ENCODE measurements at regions of chr4 and their contacts with region 1.

Region 1: GRCh38 chr4:6783053-6783981 is 790 bp downstream of the KIAA0232 start:
- DNase-seq: peak; percentile 91
- H3K4me3 Mint-ChIP-seq: peak overlapping the region; percentile 81
- H3K27ac Mint-ChIP-seq: peak overlapping the region; percentile 78
- H3K4me1 Mint-ChIP-seq: peaks cover 51% of the 10 kb centered on the region
- H3K27me3 Mint-ChIP-seq: no peaks in the 10 kb centered on the region

Region 2: DNA sequence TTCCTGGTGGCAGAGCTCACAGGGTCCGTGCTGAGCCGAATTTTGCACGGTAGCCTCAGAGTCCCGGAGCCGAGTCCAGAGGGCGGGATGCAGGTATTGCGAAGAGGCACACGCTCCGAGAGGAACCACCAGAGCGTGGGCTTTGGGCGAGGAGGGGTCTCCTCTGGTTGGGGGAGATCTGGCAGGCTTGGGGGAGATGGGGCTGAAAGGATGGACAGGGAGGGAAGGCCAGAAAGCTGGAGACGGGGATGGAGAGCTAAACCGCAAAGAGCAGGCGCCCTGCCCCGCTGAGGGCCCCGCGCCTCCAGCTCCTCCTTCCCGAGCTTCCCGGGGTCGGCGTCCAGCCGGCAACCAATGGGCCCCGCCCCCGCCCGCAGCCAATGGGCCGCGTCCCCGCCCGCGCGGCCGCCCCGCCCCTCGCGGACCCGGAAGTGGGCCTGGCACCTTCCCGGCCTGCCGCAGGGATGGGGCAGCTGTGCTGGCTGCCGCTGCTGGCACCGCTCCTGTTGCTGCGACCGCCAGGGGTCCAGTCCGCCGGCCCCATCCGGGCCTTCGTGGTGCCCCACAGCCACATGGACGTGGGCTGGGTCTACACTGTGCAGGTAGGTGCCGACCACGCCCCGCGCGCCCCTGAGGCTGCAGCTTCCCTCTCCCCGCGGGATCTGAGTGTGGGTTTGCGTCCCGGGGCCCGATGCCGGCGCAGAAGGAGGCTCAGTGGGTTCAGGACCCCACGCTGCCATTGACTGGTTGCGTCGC is 208.4 kb before region 1 on chr4 and contains the start of gene MAN2B2:
- CTCF ChIA-PET with region 1: no interaction called
- intact Hi-C with region 1: loop called (anchors 2 kb)
- DNase-seq: peak; percentile 83
- H3K4me3 Mint-ChIP-seq: peak within 1 kb of the TSS; percentile 84
- H3K27ac Mint-ChIP-seq: peak within 1 kb of the TSS; percentile 60
- H3K4me1 Mint-ChIP-seq: peaks cover 4% of the 10 kb centered on the region
- H3K27me3 Mint-ChIP-seq: no peaks in the 10 kb centered on the region
- total RNA-seq, gene MAN2B2: 12.7 to 12.8 TPM

Region 3: GRCh38 chr4:6716018-6716911 is 67.1 kb before region 1 on chr4 and contains the start of gene BLOC1S4:
- CTCF ChIA-PET with region 1: no interaction called
- intact Hi-C with region 1: loop called (anchors 1 kb)
- DNase-seq: peak; percentile 88
- H3K4me3 Mint-ChIP-seq: peak within 1 kb of the TSS; percentile 96
- H3K27ac Mint-ChIP-seq: peak within 1 kb of the TSS; percentile 95
- H3K4me1 Mint-ChIP-seq: peaks cover 26% of the 10 kb centered on the region
- H3K27me3 Mint-ChIP-seq: no peaks in the 10 kb centered on the region
- total RNA-seq, gene BLOC1S4: 11.0 to 11.8 TPM

Region 4: DNA sequence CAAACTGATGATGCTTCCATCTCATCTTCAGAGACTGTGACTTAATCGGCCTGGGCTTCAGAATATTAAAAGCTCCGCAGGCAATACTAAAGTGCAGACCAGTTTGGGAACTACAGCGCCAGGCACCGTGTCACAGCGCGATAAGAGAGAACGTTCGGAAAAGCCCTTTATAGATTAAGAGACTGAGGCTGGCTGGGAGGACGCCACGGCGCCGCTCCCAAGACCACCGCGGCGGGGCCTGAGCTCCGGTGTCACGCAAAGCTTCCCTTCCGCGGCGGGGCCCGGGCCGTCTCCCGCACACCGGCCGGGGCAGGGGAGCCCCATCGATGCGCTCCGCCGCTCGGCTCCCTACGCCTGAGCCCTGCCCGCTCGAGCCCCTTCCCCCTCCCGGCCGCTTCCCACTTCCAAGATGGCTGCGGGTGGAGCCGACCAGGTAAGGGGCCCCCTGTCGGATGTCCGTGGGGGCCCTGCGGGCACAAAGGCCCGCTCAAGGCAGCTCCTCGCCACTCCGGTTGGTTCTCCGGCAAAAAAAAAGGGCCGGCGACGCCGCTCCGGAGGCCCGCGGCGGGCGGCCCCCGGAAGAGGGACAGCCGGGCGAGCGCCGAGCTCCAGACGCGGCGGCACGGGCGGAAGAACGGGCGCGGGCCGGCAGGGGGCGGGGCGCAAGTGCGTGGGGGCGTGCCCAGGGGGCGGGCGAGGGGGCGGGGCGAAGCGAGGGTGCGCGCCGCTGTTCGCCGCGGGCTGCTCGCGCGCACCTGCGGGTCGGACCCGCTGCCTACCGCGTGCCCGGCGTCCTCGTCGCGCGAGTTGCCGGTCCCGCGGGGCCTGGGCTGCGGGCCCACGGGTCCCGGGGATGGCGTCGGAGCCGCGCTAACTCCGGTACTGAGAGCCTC is 126.0 kb after region 1 on chr4 and contains the start of gene TBC1D14:
- CTCF ChIA-PET with region 1: no interaction called
- intact Hi-C with region 1: loop called (anchors 1 kb)
- DNase-seq: peak; percentile 88
- H3K4me3 Mint-ChIP-seq: peak within 1 kb of the TSS; percentile 92
- H3K27ac Mint-ChIP-seq: peak within 1 kb of the TSS; percentile 86
- H3K4me1 Mint-ChIP-seq: peaks cover 45% of the 10 kb centered on the region
- H3K27me3 Mint-ChIP-seq: peaks cover 3% of the 10 kb centered on the region
- total RNA-seq, gene TBC1D14: 23.6 to 24.6 TPM

Region 5: DNA sequence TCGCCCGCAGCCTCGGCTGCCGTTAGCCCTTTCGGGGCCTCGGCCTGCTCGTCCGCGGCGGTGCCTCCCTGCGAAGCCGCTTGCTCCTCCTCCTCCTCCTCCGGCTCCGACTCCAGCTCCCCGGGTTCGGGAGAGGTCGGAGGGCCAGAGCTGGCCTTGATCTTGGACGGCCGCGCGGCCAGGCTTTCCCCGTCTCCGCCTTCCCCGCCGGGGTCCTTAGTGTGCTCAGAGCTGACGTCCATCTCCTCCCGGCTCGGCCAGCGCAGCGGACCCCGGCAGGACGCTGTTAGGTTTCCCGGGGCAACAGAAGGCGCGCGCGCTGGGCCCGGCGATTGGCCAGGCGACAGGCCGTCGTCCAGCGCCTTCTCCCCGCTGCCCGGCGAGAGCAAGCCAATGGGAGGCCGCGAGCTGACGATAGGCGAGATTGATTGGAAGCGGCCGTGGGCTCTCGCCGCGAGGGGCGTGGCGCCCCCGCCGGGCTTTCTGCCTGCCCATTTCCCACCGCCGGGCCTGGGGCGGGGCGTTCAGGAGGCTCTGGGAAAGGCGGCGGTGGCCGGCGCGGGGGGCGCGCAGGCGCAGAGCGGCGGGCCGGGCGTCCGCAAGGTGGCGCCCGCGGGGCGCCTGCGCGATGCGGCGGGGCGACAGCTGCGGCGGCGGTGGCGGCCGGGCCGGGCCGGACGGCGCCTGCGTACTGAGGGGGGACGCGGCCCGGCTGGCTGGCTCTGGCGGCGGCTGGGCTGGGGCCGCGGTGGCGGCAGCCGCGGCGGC is 259.6 kb after region 1 on chr4 and contains the start of gene TADA2B:
- CTCF ChIA-PET with region 1: no interaction called
- intact Hi-C with region 1: loop called (anchors 2 kb)
- DNase-seq: peak; percentile 91
- H3K4me3 Mint-ChIP-seq: peak within 1 kb of the TSS; percentile 89
- H3K27ac Mint-ChIP-seq: peak within 1 kb of the TSS; percentile 46
- H3K4me1 Mint-ChIP-seq: peaks cover 43% of the 10 kb centered on the region
- H3K27me3 Mint-ChIP-seq: no peaks in the 10 kb centered on the region
- total RNA-seq, gene TADA2B: 8.2 to 9.9 TPM

Measured in activated naive CD4-positive, alpha-beta T cell treated with anti-CD3 and anti-CD28 coated beads for 36 hours (primary cell).